Head of caudate nucleus (tissue), 42 donors: ENCODE measurements at regions of chr5 and their contacts with region 1.

Region 1: GRCh38 chr5:157253547-157253946 is 12.4 kb upstream of the CYFIP2 start:
- DNase-seq: peak in 39 of 42 donors; percentile 28 to 86 (median 65)

Region 2: GRCh38 chr5:157241483-157241882 is 12.1 kb before region 1 on chr5:
- intact Hi-C with region 1: no loop called
- DNase-seq: no peak

Region 3: DNA sequence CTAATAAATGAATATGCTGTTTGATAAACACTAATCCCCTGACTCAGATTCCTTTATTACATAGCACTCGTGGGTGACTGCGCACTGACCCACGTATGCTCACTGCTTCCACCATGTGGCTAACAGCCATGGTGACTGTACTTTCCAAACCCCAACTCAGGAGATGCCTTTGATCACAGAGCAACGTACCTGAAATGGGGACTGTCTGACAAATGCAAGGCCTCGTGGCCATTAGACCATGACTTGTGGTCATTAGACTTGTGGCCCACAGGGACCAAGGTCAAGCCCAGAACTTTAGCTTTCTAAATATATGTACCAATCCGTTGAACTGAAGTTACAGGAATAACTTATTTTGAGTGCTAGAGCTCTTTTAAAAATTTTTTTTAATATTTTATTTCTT is 58.9 kb after region 1 on chr5:
- intact Hi-C with region 1: loop called (anchors 5 kb)
- DNase-seq: peak in 39 of 42 donors; percentile 21 to 80 (median 55)

Region 4: DNA sequence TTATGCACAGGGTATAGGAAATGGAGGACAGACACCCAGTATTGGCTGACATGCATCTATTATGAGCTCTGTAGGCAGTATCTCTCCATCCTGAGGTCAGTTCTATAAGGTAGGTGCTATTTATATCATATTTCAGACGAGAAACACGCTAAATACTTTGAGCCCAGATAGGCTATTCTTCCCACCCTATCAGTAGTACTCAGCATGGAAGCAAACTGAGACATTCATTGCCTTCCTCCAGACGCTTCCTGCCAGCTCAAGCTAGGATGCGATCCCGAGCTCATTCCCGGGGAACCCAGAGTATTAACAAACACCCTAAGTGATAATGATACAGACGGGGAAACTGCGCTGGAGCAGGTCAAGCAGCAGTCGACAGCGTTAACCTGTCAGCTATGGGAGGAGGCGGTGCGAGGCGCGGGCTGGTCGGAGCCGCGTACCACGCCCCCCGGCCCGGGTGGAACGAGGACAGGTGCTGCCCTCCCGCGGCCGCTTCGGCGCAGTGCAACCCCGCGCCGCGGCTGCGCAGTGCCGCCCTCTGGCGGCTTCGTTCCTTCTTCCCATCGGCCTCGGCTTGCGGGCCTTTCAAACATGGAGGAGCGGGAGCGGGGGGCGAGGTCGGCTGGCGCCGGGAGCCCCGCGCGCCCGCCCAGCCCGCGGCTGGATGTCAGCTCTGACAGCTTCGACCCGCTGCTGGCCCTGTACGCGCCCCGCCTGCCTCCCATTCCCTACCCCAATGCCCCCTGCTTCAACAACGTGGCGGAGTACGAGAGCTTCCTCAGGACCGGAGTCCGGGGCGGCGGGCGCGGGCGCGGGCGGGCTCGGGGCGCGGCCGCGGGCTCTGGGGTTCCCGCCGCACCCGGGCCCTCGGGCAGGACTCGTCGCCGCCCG is 489.9 kb after region 1 on chr5 and contains the start of gene LSM11:
- intact Hi-C with region 1: loop called (anchors 10 kb)
- DNase-seq: peak; percentile 66 to 95 (median 88)